HEK293 (cell line): ENCODE measurements at regions of chr6 and their contacts with region 1.

Region 1: GRCh38 chr6:136846046-136846445 is 23.7 kb downstream of the PEX7 start:
- H3K4me3 ChIP-seq: no peak overlapping the region
- H3K27ac ChIP-seq: no peak overlapping the region
- H3K4me1 ChIP-seq: no peaks in the 10 kb centered on the region
- CTCF ChIP-seq: no peak

Region 2: DNA sequence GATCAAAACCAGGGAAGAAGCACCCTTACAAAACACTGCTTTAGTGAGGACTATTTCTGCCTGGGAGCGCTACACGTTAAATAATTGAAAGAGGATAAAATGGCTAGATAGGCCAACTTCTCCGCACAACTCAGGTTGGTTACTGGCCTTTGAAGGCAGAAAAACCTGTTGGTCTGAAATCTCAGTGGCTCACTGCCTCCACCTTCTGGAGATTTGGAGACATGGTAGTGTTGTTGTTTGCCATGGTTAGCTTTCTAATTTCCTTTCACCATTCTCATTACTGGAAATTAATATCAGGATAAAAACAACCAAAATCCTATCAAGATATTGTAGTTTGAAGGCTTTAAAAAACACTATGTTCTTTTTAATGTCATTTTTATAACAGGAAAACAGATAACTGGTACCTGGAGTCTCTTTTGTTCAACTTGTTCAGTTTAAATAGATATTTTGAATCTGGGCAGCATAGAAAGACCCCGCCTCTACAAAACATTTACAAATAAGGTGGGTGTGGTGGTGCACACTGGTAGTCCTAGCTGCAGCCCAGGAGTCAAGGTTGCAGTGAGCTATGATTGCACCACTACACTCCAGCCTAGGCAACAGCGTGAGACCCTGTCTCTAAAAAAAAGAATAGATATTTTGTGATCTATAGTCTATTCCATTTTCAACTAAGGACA is 528.9 kb before region 1 on chr6:
- CTCF ChIA-PET with region 1: no interaction called
- POLR2A ChIA-PET with region 1: no interaction called
- H3K4me3 ChIP-seq: no peak overlapping the region
- H3K27ac ChIP-seq: no peak overlapping the region
- H3K4me1 ChIP-seq: no peaks in the 10 kb centered on the region
- CTCF ChIP-seq: peak; percentile 47

Region 3: GRCh38 chr6:136859430-136859829 is 13.4 kb after region 1 on chr6:
- CTCF ChIA-PET with region 1: interaction called, 21 read pairs
- POLR2A ChIA-PET with region 1: no interaction called
- H3K4me3 ChIP-seq: no peak overlapping the region
- H3K27ac ChIP-seq: no peak overlapping the region
- H3K4me1 ChIP-seq: no peaks in the 10 kb centered on the region
- CTCF ChIP-seq: no peak

Region 4: DNA sequence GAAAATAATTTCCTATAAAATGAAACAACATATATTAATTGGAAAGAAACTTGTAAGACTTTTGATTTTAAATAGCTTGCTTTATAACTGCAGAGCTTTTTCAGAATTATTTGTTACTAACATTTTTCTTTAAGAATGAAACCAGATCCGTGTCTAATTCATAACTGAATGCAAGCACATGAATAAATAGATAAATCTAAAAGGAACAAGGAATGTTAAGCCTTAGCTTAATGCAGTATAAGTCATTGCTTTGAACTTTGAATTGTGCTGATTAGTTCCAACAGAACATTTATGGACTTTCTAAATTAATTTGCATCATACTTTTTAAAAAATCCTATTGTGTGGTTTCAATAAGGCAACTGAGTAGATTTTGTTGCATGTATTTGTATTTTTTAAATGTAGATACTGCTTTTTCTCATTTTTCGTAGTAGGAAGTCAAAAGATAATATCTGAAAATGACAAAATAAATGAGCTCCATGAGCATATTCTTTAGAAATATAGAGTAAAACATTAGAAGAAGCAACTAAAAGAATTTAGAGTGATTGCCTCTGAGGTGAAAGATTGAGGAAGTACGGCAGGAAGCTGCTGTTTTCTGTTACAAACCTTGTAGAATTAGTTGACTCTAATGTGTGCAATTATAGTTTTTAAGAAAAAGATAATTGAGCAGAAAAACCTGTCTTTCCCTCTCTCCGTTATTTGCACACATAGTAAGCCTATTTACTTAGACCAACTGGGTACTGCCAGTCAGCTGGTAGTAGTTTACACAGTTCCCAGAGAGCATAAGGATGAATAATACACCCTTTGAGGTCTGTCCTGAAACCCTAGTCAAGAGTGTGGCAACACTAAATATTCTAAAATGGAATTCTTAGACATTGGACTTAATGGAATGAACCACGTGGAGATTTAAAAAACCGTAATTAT is 43.5 kb after region 1 on chr6:
- CTCF ChIA-PET with region 1: interaction called, 33 read pairs
- POLR2A ChIA-PET with region 1: no interaction called
- H3K4me3 ChIP-seq: no peak overlapping the region
- H3K27ac ChIP-seq: no peak overlapping the region
- H3K4me1 ChIP-seq: peaks cover 24% of the 10 kb centered on the region
- CTCF ChIP-seq: no peak

Region 5: DNA sequence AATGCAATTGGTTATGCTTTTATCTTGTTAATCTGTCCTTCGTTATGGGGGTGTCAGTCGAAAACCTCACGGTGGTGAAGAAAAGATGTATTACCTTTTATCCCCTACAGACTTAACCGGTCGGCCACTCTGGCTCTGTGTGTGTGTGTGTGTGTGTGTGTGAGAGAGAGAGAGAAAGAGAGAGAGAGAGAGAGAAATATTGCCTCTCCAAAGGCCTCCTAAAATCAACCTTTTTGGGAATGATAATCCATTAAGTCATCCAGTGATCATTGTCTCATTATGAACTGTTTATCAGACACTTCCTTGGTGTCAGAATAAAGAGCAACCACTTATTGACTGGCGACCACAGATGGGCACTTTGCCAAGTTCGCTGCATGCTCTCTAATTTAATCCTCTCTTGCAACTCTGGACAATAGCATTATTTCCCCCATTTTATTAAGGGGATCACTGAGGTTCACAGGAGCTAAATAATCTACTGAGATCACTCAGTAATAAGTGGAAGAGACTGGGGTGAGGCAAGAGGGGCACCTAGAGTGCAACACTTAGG is 106.7 kb after region 1 on chr6:
- CTCF ChIA-PET with region 1: no interaction called
- POLR2A ChIA-PET with region 1: no interaction called
- H3K4me3 ChIP-seq: no peak overlapping the region
- H3K27ac ChIP-seq: no peak overlapping the region
- H3K4me1 ChIP-seq: peaks cover 3% of the 10 kb centered on the region
- CTCF ChIP-seq: no peak

Region 6: DNA sequence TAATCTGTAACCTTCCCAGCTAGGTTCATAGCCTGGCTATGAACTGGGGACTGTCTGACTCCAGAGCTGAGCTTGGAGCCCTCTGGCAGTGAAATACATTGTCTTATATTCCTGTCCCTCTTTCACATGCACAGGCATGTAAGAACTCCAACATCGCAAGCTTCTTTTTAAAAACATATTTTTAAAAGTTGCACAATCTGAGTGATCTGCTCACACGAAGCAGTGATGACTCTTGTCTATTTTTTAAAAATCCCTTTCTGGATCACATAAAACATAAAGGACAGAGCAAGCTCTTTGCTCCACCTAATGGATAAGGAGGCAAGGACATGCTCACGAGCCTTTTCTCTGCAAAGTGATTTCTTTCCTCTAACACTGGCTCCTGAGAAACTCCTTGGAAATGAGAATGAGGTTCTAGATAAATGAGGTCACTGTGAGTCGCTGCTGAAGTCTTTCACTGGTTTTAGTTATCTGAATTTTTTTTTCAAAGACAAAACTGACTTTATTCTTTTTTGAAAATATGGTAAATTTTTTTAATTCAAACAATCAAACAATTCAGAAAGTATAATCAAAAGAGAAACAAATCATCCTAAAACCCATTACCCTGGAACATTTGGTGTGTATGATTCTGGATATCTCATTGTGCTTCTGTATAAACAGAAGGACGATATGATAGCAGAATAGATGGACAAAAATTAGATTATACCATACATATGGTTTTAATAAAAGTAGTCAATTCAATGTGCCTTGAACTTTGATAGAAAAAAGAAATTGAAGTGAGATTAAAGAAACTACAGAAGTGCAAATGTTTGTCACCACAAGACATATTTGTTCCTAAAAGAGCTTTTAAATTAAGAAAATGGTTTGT is 167.9 kb after region 1 on chr6:
- CTCF ChIA-PET with region 1: interaction called, 25 read pairs
- POLR2A ChIA-PET with region 1: no interaction called
- H3K4me3 ChIP-seq: no peak overlapping the region
- H3K27ac ChIP-seq: no peak overlapping the region
- H3K4me1 ChIP-seq: no peaks in the 10 kb centered on the region
- CTCF ChIP-seq: no peak